ENCODE measurements at regions of chr1 and their contacts with region 1.

Region 1: GRCh38 chr1:149886396-149887195 is 12.8 kb upstream of the BOLA1 start:
- DNase-seq: peak; percentile 65 to 97 (median 86)
- ATAC-seq: peak; percentile 69 to 76 (median 74)
- H3K4me3 ChIP-seq: peak overlapping the region; percentile 78 to 94
- H3K4me3 Mint-ChIP-seq: no peak overlapping the region
- H3K27ac ChIP-seq: peak overlapping the region; percentile 97
- H3K27ac Mint-ChIP-seq: no peak overlapping the region
- H3K4me1 ChIP-seq: peaks cover 17 to 35% of the 10 kb centered on the region in 2 experiments
- H3K4me1 Mint-ChIP-seq: peaks cover 10 to 12% (median 11%) of the 10 kb centered on the region in 3 donors
- H3K27me3 ChIP-seq: no peaks in the 10 kb centered on the region
- H3K27me3 Mint-ChIP-seq: no peaks in the 10 kb centered on the region

Region 2: DNA sequence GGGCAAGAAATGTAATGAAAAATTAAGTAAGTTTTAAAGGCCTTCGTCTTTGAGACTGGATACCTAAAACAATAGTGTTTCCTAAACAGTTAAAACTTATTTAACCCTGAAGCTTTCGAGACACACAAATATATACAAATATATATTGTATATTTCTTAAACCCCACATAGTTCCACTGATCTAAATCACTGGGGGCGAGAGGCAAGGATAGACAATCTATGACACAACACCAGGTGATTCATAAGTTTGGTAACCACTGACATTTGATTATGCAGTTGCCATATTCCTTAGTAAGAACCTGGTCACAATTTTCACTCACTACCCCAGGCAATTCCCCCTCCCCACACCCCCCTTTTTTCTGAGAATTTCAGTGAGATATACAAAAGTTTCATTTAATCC is 42.5 kb before region 1 on chr1:
- CTCF ChIA-PET with region 1: interaction called in 1 of 2 experiments, 11 read pairs
- POLR2A ChIA-PET with region 1: interaction called, 13 to 56 read pairs
- DNase-seq: peak in 1 of 35 experiments; percentile 42
- ATAC-seq: no peak
- H3K4me3 ChIP-seq: peak overlapping the region in 1 of 2 donors; percentile 77
- H3K4me3 Mint-ChIP-seq: peak overlapping the region; percentile 86 to 90 (median 87)
- H3K27ac ChIP-seq: peak overlapping the region; percentile 70
- H3K27ac Mint-ChIP-seq: peak overlapping the region; percentile 80 to 83
- H3K4me1 ChIP-seq: peaks cover 16 to 43% of the 10 kb centered on the region in 2 experiments
- H3K4me1 Mint-ChIP-seq: peaks cover 44 to 51% (median 50%) of the 10 kb centered on the region in 3 donors
- H3K27me3 ChIP-seq: no peaks in the 10 kb centered on the region
- H3K27me3 Mint-ChIP-seq: no peaks in the 10 kb centered on the region

Region 3: DNA sequence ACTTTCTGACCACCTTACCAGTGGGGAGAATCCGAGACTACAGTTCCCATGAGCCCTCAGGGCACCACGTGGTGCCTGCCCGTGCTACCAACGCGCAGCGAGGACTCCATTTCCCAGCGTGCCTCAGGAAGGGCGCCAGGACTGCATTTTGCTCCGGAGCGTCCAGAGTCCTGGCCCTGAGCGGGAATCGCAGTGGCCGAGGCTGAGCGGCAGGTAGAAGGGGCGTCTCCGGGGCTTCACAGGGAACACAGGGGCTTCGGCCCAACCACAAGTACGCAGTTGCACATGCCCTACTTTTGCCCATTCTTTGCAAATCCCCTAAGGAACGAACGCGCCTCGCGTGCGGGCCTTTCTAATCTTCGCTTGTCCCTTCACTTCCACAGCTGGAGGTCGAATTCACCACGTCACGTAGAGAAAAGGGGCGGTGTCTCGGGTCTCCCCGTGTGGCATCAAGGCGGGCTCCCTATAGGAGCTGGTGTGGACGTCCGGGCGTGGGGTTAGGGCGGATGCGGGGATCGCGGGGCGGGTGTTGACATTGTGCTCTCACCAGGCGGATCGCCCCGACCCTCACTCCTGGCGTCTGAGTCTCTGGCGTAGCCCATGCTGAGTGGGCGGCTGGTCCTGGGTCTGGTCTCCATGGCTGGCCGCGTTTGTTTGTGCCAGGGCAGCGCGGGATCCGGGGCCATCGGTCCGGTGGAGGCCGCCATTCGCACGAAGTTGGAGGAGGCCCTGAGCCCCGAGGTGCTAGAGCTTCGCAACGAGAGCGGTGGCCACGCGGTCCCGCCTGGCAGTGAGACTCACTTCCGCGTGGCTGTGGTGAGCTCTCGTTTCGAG is 13.1 kb after region 1 on chr1 and contains the start of gene BOLA1:
- CTCF ChIA-PET with region 1: interaction called in 1 of 2 experiments, 5 read pairs
- POLR2A ChIA-PET with region 1: interaction called, 3 to 15 read pairs
- DNase-seq: peak; percentile 56 to 90 (median 77)
- ATAC-seq: peak; percentile 98 to 99 (median 98)
- H3K4me3 ChIP-seq: peak within 1 kb of the TSS; percentile 73 to 80
- H3K4me3 Mint-ChIP-seq: peak within 1 kb of the TSS; percentile 86 to 92 (median 91)
- H3K27ac ChIP-seq: peak within 1 kb of the TSS; percentile 74
- H3K27ac Mint-ChIP-seq: peak within 1 kb of the TSS; percentile 89 to 95
- H3K4me1 ChIP-seq: peaks cover 0 to 16% of the 10 kb centered on the region in 2 experiments
- H3K4me1 Mint-ChIP-seq: peaks cover 20 to 23% (median 21%) of the 10 kb centered on the region in 3 donors
- H3K27me3 ChIP-seq: no peaks in the 10 kb centered on the region
- H3K27me3 Mint-ChIP-seq: no peaks in the 10 kb centered on the region
- total RNA-seq, gene BOLA1: 6.0 to 27.6 (median 26.1) TPM

Region 4: GRCh38 chr1:150010393-150011115 is 124.0 kb after region 1 on chr1 and contains the start of gene OTUD7B:
- CTCF ChIA-PET with region 1: no interaction called
- POLR2A ChIA-PET with region 1: interaction called, 3 to 14 read pairs
- DNase-seq: peak; percentile 4 to 68 (median 47)
- ATAC-seq: peak; percentile 82 to 85 (median 83)
- H3K4me3 ChIP-seq: peak within 1 kb of the TSS; percentile 88 to 94
- H3K4me3 Mint-ChIP-seq: peak within 1 kb of the TSS; percentile 94 to 98 (median 96)
- H3K27ac ChIP-seq: peak within 1 kb of the TSS; percentile 56
- H3K27ac Mint-ChIP-seq: peak within 1 kb of the TSS; percentile 84 to 85
- H3K4me1 ChIP-seq: peaks cover 4 to 10% of the 10 kb centered on the region in 2 experiments
- H3K4me1 Mint-ChIP-seq: peaks cover 30 to 37% (median 35%) of the 10 kb centered on the region in 3 donors
- H3K27me3 ChIP-seq: peaks cover 0 to 10% of the 10 kb centered on the region in 2 experiments
- H3K27me3 Mint-ChIP-seq: no peaks in the 10 kb centered on the region
- total RNA-seq, gene OTUD7B: 7.8 to 13.7 (median 10.2) TPM

Region 5: GRCh38 chr1:150176593-150176992 is 290.0 kb after region 1 on chr1:
- CTCF ChIA-PET with region 1: no interaction called
- POLR2A ChIA-PET with region 1: no interaction called
- DNase-seq: no peak
- ATAC-seq: no peak
- H3K4me3 ChIP-seq: no peak overlapping the region
- H3K4me3 Mint-ChIP-seq: no peak overlapping the region
- H3K27ac ChIP-seq: no peak overlapping the region
- H3K27ac Mint-ChIP-seq: no peak overlapping the region
- H3K4me1 ChIP-seq: no peaks in the 10 kb centered on the region
- H3K4me1 Mint-ChIP-seq: no peaks in the 10 kb centered on the region
- H3K27me3 ChIP-seq: peaks cover 0 to 3% of the 10 kb centered on the region in 2 experiments
- H3K27me3 Mint-ChIP-seq: peaks cover 1 to 4% of the 10 kb centered on the region in 2 donors

Region 6: DNA sequence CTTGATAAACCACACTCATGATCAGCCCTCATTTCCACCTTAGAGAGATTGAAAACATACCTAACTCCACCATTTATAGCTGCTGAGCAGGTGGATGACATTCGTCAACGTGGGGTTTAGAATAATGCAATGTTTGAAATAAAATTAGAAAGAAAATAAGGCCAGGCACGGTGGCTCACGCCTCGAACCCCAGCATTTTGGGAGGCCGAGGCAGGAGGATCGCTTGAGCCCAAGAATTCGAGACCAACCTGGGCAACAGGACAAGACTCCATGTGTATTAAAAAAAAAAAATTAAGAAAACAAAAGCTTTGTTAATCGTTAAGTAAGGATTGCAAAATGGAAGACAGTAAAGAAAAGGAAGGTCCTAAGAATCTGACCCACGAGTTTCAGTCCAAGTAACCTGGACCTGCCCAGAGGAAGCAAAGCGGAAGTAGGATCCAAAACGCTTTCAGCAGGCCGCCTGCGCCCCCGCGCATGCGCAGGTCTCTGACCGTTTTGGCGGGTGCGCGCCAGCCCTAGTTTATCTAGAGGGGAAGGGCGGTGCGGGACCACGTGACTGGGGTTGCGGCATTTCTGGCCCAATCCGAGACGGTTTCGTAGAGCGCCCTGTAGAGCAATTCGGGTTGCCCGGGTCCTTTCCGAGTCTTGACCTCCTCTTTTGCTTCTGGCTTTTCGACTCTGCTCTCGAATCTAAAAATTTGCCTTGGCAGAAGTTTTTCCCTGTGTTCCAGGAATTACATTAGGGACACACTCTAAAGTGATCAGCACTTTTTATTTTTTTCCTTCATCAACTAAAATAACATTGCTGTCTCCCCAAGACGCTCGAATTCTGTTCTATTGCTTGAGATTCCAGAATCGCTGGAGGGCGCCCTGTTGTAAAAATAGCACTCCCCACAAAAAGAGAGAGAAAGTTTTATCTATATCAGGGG is 326.8 kb after region 1 on chr1:
- CTCF ChIA-PET with region 1: no interaction called
- POLR2A ChIA-PET with region 1: no interaction called
- DNase-seq: peak; percentile 74 to 94 (median 89)
- ATAC-seq: peak; percentile 99 to 100 (median 100)
- H3K4me3 ChIP-seq: peak overlapping the region; percentile 61 to 65
- H3K4me3 Mint-ChIP-seq: peak overlapping the region; percentile 83 to 86 (median 84)
- H3K27ac ChIP-seq: peak overlapping the region; percentile 79
- H3K27ac Mint-ChIP-seq: peak overlapping the region; percentile 93
- H3K4me1 ChIP-seq: peaks cover 7 to 12% of the 10 kb centered on the region in 2 experiments
- H3K4me1 Mint-ChIP-seq: peaks cover 14 to 17% (median 15%) of the 10 kb centered on the region in 3 donors
- H3K27me3 ChIP-seq: no peaks in the 10 kb centered on the region
- H3K27me3 Mint-ChIP-seq: no peaks in the 10 kb centered on the region

Region 7: DNA sequence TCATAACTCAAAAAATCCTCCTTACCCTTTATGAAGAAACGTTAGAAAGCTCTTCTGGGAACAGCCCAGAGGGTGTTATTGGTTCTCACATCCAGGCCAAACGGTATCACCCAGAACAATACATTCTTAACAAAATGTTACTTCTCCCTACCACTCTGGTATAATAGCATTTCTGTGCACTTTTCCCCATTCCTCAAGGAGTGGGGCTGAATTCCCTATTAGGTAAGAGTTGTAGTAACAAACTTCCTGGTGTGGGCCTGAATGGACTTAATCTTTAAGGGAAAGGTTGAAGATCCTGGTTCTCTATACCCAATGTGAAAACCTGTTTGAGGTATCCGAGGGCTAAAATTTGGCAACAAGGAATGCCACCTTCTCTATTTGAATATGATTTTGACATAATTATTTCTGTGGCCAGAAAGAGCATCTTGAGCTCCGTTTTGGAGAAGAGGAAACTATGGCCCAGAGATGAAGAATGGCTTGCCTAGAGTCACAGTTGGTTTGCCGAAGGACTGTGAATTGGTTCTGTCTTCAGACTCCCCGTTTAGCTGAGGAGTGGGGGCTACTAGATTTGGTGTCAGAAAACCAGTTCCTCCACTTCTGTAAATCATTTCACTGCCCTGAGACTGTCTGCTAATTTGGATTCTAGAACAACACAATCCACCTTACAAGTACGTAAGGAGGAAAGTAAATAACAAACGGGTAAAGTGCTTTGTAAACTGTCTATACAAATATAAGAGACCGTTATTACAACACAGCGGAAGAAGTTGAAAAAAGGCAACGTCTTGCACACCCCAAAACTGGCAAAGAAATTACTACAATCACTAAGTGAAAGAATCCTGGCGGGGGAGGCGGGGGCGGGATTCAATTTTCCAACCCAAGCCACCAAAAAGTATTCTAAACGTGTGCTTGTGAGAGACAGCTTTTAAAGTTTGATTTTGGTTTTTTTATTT is 347.0 kb after region 1 on chr1:
- CTCF ChIA-PET with region 1: no interaction called
- POLR2A ChIA-PET with region 1: interaction called, 5 to 11 read pairs
- DNase-seq: peak in 4 of 35 experiments; percentile 7 to 50 (median 14)
- ATAC-seq: no peak
- H3K4me3 ChIP-seq: peak overlapping the region; percentile 66 to 98
- H3K4me3 Mint-ChIP-seq: no peak overlapping the region
- H3K27ac ChIP-seq: peak overlapping the region; percentile 99
- H3K27ac Mint-ChIP-seq: peak overlapping the region; percentile 96 to 98
- H3K4me1 ChIP-seq: peaks cover 2 to 13% of the 10 kb centered on the region in 2 experiments
- H3K4me1 Mint-ChIP-seq: peaks cover 16 to 20% (median 19%) of the 10 kb centered on the region in 3 donors
- H3K27me3 ChIP-seq: no peaks in the 10 kb centered on the region
- H3K27me3 Mint-ChIP-seq: no peaks in the 10 kb centered on the region